ENCODE measurements at regions of chr5 and their contacts with region 1.

Region 1: GRCh38 chr5:134176511-134177368 is at the start of gene SKP1:
- DNase-seq: peak; percentile 79 to 85 (median 83)
- H3K4me3 ChIP-seq: peak within 1 kb of the TSS; percentile 75 to 96 (median 94)
- H3K4me3 Mint-ChIP-seq: peak within 1 kb of the TSS; percentile 98
- H3K27ac ChIP-seq: peak within 1 kb of the TSS; percentile 96 to 97
- H3K27ac Mint-ChIP-seq: peak within 1 kb of the TSS; percentile 93 to 98 (median 97)
- H3K4me1 ChIP-seq: peaks cover 11 to 26% of the 10 kb centered on the region in 2 donors
- H3K4me1 Mint-ChIP-seq: peaks cover 24% of the 10 kb centered on the region
- H3K27me3 ChIP-seq: no peaks in the 10 kb centered on the region
- H3K27me3 Mint-ChIP-seq: peaks cover 0 to 5% (median 2%) of the 10 kb centered on the region in 3 donors
- CTCF ChIP-seq: no peak
- polyA plus RNA-seq, gene SKP1: 182 to 787 (median 735) TPM

Region 2: DNA sequence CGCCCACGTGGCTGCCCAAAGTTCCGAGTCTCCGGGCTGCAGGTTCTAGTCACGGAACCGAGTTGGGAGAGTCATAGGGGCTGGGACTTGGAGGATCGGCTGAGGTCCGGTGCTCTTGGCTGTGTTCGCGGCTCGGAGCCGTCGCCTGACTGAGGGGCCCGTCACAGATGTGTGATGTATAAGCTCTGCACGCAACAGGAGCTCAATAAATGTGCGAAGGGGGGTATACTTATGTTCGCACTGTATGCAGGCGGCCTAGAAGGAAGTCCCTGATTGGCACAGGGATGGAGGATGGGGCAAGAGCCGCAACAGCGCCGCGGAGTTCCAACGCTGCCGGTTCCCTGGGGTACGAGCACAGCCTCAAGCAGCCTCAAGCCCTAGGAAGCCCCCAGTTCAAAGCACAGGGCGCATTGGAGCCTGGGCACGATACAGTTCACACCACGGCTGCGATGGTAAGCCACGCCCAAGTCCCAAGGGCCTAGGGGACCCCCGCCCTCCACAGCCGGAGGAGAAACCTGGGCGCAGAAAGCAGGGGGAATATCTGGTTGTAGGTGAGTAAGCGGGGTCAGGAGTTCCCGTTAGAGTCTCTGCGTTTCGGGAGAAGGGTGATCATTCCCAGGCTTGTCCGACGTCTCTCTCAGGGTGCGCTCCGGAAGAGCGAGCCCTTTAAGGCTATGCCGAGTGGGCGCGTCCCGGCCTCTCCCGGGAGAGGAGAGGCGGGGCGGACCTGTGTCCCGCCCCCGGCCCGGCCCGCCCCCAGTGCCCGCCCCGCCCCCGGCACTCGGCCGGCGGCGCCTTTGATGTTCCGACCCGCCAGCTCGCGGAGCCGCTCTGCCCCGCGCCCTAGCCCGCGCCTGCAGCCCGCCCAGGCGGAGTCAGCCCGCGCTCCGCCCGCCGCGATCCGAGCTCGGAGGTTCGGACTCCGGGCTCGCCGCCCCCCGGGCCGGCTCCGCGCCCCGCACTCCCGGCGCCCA is 62.6 kb before region 1 on chr5 and contains the start of gene TCF7:
- intact Hi-C with region 1: no loop called
- DNase-seq: peak; percentile 57 to 75 (median 57)
- H3K4me3 ChIP-seq: peak within 1 kb of the TSS; percentile 60 to 89 (median 66)
- H3K4me3 Mint-ChIP-seq: peak within 1 kb of the TSS; percentile 93 to 96
- H3K27ac ChIP-seq: peak within 1 kb of the TSS in 1 of 2 donors; percentile 26
- H3K27ac Mint-ChIP-seq: peak within 1 kb of the TSS in 3 of 7 donors; percentile 58 to 79 (median 75)
- H3K4me1 ChIP-seq: peaks cover 12 to 19% of the 10 kb centered on the region in 2 donors
- H3K4me1 Mint-ChIP-seq: peaks cover 14% of the 10 kb centered on the region
- H3K27me3 ChIP-seq: peaks cover 41 to 59% of the 10 kb centered on the region in 2 donors
- H3K27me3 Mint-ChIP-seq: peaks cover 56 to 71% (median 61%) of the 10 kb centered on the region in 3 donors
- CTCF ChIP-seq: no peak
- polyA plus RNA-seq, gene TCF7: 0.15 to 0.84 (median 0.83) TPM

Region 3: GRCh38 chr5:134145779-134146581 is 30.8 kb before region 1 on chr5:
- intact Hi-C with region 1: no loop called
- DNase-seq: peak; percentile 63 to 71 (median 65)
- H3K4me3 ChIP-seq: no peak overlapping the region
- H3K4me3 Mint-ChIP-seq: no peak overlapping the region
- H3K27ac ChIP-seq: no peak overlapping the region
- H3K27ac Mint-ChIP-seq: peak overlapping the region in 1 of 7 donors; percentile 32
- H3K4me1 ChIP-seq: peaks cover 0 to 6% of the 10 kb centered on the region in 2 donors
- H3K4me1 Mint-ChIP-seq: peaks cover 9% of the 10 kb centered on the region
- H3K27me3 ChIP-seq: no peaks in the 10 kb centered on the region
- H3K27me3 Mint-ChIP-seq: peaks cover 0 to 5% (median 0%) of the 10 kb centered on the region in 3 donors
- CTCF ChIP-seq: peak; percentile 99

Region 4: GRCh38 chr5:134225618-134226440 is 49.1 kb after region 1 on chr5 and contains the start of gene PPP2CA:
- intact Hi-C with region 1: loop called in 1 of 2 experiments (anchors 5 kb)
- DNase-seq: peak; percentile 97 to 99 (median 99)
- H3K4me3 ChIP-seq: peak within 1 kb of the TSS; percentile 84 to 96 (median 88)
- H3K4me3 Mint-ChIP-seq: peak within 1 kb of the TSS; percentile 94 to 97
- H3K27ac ChIP-seq: peak within 1 kb of the TSS; percentile 97 to 99
- H3K27ac Mint-ChIP-seq: peak within 1 kb of the TSS; percentile 97 to 99 (median 99)
- H3K4me1 ChIP-seq: peaks cover 32 to 47% of the 10 kb centered on the region in 2 donors
- H3K4me1 Mint-ChIP-seq: peaks cover 33% of the 10 kb centered on the region
- H3K27me3 ChIP-seq: no peaks in the 10 kb centered on the region
- H3K27me3 Mint-ChIP-seq: no peaks in the 10 kb centered on the region
- CTCF ChIP-seq: peak; percentile 18
- polyA plus RNA-seq, gene PPP2CA: 82.5 to 245 (median 225) TPM